PC-9 (cell line): ENCODE measurements at regions of chr19 and their contacts with region 1.

Region 1: DNA sequence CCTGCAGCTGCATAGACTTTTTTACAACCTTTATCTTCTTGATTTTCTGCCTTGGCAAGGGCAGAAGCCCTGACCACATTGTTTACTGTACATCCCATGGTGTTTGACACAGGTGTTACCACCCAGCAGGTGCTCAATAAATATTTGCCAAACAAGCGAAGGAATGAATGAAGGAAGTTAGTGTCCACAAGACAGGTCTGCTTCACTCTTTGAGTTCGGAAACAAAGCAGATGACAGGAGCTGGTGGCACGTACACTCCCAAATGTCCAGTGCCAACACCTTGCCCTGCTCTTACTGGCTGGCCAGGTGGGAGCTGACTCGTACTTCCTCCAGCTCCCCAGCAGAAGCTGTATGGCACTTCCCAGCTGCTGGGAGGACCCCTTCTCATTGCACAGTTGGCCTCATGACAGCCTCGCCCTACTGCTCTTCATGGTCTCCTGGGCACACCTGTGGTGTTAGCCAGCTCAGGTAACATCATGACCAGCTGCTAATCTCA is 22.0 kb upstream of the MUC16 start:
- DNase-seq: peak; percentile 81 to 100
- H3K4me3 ChIP-seq: no peak overlapping the region
- H3K27ac ChIP-seq: peak overlapping the region; percentile 52
- H3K4me1 ChIP-seq: peaks cover 27% of the 10 kb centered on the region
- H3K27me3 ChIP-seq: no peaks in the 10 kb centered on the region
- CTCF ChIP-seq: no peak

Region 2: DNA sequence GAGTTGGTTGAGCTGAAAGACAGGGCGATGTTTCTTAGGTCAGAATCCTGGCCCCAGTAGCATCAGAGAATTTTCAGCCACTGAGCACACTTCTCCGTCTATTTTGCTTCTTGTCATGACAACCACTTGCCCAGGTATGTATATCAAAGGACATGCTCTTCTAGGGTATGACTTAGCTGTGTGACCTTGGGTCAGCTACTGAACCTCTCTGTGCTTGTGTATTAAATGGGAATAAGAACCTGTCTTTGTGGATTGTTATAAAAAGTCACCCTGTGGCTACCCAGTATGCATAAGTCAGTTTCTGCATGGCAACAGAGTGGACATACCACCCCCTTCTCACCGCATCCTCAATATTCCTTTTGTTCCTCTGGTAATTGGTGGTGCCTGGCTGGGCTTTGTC is 173.9 kb before region 1 on chr19:
- CTCF ChIA-PET with region 1: no interaction called
- POLR2A ChIA-PET with region 1: no interaction called
- intact Hi-C with region 1: no loop called
- DNase-seq: no peak
- H3K4me3 ChIP-seq: no peak overlapping the region
- H3K27ac ChIP-seq: no peak overlapping the region
- H3K4me1 ChIP-seq: no peaks in the 10 kb centered on the region
- H3K27me3 ChIP-seq: no peaks in the 10 kb centered on the region
- CTCF ChIP-seq: no peak

Region 3: DNA sequence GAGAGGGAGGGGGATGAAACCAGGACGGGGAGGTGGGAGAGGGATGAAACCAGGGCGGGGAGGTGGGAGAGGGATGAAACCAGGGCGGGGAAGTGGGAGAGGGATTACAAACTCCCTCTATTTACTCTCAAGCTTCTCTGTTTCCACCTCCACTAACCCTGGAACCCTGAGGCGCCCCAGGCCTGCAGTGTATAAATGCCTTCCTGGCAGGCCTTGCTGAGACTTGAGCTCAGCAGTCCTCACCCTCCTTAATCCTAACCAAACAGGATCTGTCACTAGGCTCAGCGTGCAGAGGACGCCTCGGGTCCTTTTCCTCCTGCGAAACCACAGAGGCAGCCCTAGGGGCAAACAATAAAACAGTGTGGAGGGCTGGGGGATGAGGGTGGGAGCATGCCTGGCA is 22.6 kb after region 1 on chr19:
- CTCF ChIA-PET with region 1: no interaction called
- POLR2A ChIA-PET with region 1: interaction called, 11 read pairs
- intact Hi-C with region 1: loop called (anchors 1 kb)
- DNase-seq: peak; percentile 90 to 98
- H3K4me3 ChIP-seq: peak overlapping the region; percentile 35; the same call in 1 of the 2 replicates
- H3K27ac ChIP-seq: peak overlapping the region; percentile 92
- H3K4me1 ChIP-seq: peaks cover 73% of the 10 kb centered on the region
- H3K27me3 ChIP-seq: no peaks in the 10 kb centered on the region
- CTCF ChIP-seq: no peak